ENCODE measurements at regions of chr18 and their contacts with region 1.

Region 1: GRCh38 chr18:63410792-63411191 is 11.5 kb downstream of the VPS4B start:
- DNase-seq: no peak
- H3K4me3 Mint-ChIP-seq: peak overlapping the region; percentile 9
- H3K27ac Mint-ChIP-seq: peak overlapping the region; percentile 73
- H3K4me1 Mint-ChIP-seq: peaks cover 70% of the 10 kb centered on the region
- H3K27me3 Mint-ChIP-seq: no peaks in the 10 kb centered on the region

Region 2: GRCh38 chr18:63394954-63395353 is 15.8 kb before region 1 on chr18:
- CTCF ChIA-PET with region 1: no interaction called
- POLR2A ChIA-PET with region 1: no interaction called
- DNase-seq: no peak
- H3K4me3 Mint-ChIP-seq: no peak overlapping the region
- H3K27ac Mint-ChIP-seq: no peak overlapping the region
- H3K4me1 Mint-ChIP-seq: peaks cover 10% of the 10 kb centered on the region
- H3K27me3 Mint-ChIP-seq: no peaks in the 10 kb centered on the region

Region 3: DNA sequence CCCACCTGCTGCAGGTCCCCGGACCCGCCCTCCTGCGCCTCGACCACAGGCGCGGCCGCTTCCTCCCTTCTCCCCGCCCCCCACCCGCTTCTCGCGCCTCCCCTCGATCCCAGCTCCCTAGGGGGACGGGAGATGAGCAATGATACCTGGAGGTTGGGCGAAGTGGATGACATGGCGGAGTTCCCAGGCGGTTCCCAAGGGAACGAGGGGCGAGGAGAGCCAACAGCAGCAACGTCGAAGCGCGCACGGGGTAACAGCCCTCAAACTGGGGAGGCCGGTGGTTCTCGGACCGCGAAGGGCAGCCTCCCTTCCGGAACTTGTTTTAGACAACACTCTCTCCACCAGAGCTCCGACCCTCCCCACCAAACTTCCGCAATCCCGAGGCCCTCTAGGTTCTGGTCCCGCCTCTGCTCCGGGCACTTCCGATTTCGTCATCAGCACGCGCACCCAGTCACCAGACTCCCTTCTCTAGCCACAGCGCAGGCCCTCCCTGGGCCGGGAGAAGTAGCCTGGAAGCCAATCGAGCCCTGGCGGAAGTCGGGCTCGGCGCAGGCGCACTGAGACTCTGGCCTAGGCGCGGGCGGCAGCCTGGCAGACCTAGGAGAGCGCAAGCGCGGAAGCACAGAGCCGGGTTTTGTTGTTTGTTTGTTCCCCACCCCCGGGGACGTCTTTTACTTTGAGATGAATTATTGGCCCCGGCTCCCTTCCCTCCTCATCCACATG is 11.5 kb after region 1 on chr18 and contains the start of gene VPS4B:
- CTCF ChIA-PET with region 1: interaction called, 3 read pairs
- POLR2A ChIA-PET with region 1: interaction called, 83 read pairs
- DNase-seq: peak; percentile 100
- H3K4me3 Mint-ChIP-seq: peak within 1 kb of the TSS; percentile 89
- H3K27ac Mint-ChIP-seq: peak within 1 kb of the TSS; percentile 91
- H3K4me1 Mint-ChIP-seq: peaks cover 36% of the 10 kb centered on the region
- H3K27me3 Mint-ChIP-seq: no peaks in the 10 kb centered on the region
- total RNA-seq, gene VPS4B: 72.4 to 77.0 TPM